ENCODE measurements at regions of chr10 and their contacts with region 1.

Region 1: GRCh38 chr10:68156373-68157185 is 47.3 kb downstream of the MYPN start:
- DNase-seq: peak; percentile 31
- CTCF ChIP-seq: peak; percentile 87

Region 2: DNA sequence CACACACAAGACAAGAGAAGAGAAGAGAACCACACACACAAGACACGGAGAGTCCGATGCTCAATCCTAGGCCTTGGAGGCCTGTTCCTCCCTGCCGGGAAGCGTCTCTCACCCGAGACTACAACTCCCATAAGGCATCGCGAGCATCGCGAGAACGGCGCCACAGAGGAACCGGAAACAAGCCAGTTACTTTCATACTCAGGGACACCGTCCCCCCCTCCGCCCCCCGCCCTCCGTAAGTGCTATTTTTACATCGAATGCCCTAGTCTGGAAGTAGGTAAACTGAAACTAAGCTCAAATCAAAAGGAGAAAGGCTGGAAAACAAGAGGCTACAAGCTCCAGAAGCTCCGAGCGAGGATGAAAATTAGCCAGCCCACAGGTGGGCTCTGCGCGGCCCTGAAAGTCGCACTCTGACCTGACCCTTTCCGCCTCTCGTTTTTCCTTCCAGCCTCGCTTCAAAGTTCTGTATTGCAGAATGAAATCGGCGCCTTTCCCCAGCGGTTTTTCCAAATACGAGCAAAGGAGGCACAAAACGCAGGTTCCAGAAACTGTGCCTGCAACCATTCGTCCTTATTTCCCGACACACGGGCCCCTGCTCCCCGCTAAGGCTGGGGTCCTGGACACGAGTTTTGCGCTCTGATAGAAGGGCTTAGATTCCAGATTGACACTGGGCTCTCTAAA is 307.1 kb before region 1 on chr10:
- in situ Hi-C with region 1: loop called (anchors 10 kb)
- DNase-seq: peak; percentile 87
- CTCF ChIP-seq: peak; percentile 5